ENCODE measurements at regions of chr1 and their contacts with region 1.

Region 1: DNA sequence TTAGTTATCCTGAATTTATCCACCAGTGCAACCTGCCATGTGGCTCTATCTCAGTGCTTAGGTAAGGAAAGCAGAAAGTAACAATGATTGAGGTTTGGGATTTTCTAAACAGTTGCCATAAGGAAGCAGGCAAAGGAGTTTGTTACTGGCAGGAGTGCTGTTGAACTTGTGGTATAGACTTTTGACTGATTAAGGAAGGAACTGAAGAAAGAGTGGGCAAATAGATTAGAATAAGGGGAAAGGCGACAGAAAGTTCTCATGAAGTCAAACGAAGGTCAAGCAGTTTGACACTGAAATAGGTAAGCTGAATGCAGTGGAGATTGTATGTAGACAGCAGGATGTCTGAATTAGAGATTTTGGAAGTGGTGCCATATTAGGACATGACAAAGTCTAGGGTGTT is 24.2 kb upstream of the CR2 start:
- DNase-seq: peak; percentile 41
- ATAC-seq: peak; percentile 2
- H3K4me3 ChIP-seq: peak overlapping the region in 1 of 5 experiments; percentile 54
- H3K4me3 Mint-ChIP-seq: peak overlapping the region; percentile 62
- H3K27ac ChIP-seq: peak overlapping the region; percentile 65 to 83
- H3K27ac Mint-ChIP-seq: peak overlapping the region; percentile 78
- H3K4me1 ChIP-seq: peaks cover 80 to 85% of the 10 kb centered on the region in 2 donors
- H3K4me1 Mint-ChIP-seq: peaks cover 86% of the 10 kb centered on the region
- H3K27me3 ChIP-seq: no peaks in the 10 kb centered on the region
- H3K27me3 Mint-ChIP-seq: no peaks in the 10 kb centered on the region
- CTCF ChIP-seq: no peak

Region 2: DNA sequence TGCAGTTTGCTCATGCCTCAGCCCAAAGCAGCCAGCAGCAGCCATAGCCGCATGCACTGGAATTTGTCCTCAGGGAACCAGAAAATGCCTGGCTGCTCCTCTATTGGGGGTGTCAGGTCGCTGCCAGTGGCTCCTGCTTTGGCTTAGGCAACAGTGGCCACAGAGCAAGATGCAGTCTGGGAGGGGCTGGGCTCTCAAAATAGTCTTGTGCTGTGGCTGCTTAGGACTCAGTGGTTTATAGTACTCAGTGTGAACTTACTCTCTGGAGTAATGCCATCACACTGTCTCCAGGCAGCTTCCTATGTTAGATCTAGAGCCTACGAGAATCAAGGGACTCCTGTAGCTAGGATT is 83.4 kb before region 1 on chr1:
- CTCF ChIA-PET with region 1: no interaction called
- POLR2A ChIA-PET with region 1: no interaction called
- intact Hi-C with region 1: no loop called
- DNase-seq: no peak
- ATAC-seq: no peak
- H3K4me3 ChIP-seq: no peak overlapping the region
- H3K4me3 Mint-ChIP-seq: no peak overlapping the region
- H3K27ac ChIP-seq: peak overlapping the region in 1 of 2 donors; percentile 31
- H3K27ac Mint-ChIP-seq: no peak overlapping the region
- H3K4me1 ChIP-seq: peaks cover 22 to 51% of the 10 kb centered on the region in 2 donors
- H3K4me1 Mint-ChIP-seq: peaks cover 82% of the 10 kb centered on the region
- H3K27me3 ChIP-seq: no peaks in the 10 kb centered on the region
- H3K27me3 Mint-ChIP-seq: no peaks in the 10 kb centered on the region
- CTCF ChIP-seq: no peak

Region 3: GRCh38 chr1:207414606-207415108 is 15.3 kb before region 1 on chr1:
- CTCF ChIA-PET with region 1: interaction called, 8 read pairs
- POLR2A ChIA-PET with region 1: interaction called, 4 read pairs
- intact Hi-C with region 1: loop called (anchors 1 kb)
- DNase-seq: peak; percentile 84
- ATAC-seq: peak; percentile 90
- H3K4me3 ChIP-seq: peak overlapping the region in 4 of 5 experiments; percentile 28 to 39 (median 34)
- H3K4me3 Mint-ChIP-seq: peak overlapping the region; percentile 75
- H3K27ac ChIP-seq: peak overlapping the region; percentile 67 to 93
- H3K27ac Mint-ChIP-seq: peak overlapping the region; percentile 80
- H3K4me1 ChIP-seq: peaks cover 80 to 83% of the 10 kb centered on the region in 2 donors
- H3K4me1 Mint-ChIP-seq: peaks cover 77% of the 10 kb centered on the region
- H3K27me3 ChIP-seq: no peaks in the 10 kb centered on the region
- H3K27me3 Mint-ChIP-seq: no peaks in the 10 kb centered on the region
- CTCF ChIP-seq: no peak

Region 4: DNA sequence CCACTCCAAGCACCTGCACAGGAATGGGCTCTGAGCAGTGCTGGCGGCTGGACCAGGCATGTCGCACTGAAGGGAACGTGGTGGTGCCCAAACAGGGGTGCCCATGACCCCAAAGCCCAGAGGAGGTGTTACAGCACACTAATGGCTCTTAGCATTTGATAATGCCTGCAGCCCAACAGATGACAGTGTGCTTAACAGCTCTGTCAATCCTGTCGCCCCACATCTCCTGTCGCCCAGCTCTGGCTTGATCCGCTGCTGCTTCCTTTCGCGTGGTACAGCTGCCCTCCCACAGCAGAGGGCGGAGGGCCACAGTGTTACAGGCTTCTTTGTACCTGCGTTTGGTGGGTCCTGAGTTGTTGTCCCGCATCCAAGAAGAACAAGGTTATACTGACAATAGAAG is 182.8 kb after region 1 on chr1:
- CTCF ChIA-PET with region 1: no interaction called
- POLR2A ChIA-PET with region 1: no interaction called
- intact Hi-C with region 1: no loop called
- DNase-seq: no peak
- ATAC-seq: no peak
- H3K4me3 ChIP-seq: no peak overlapping the region
- H3K4me3 Mint-ChIP-seq: no peak overlapping the region
- H3K27ac ChIP-seq: no peak overlapping the region
- H3K27ac Mint-ChIP-seq: no peak overlapping the region
- H3K4me1 ChIP-seq: no peaks in the 10 kb centered on the region
- H3K4me1 Mint-ChIP-seq: no peaks in the 10 kb centered on the region
- H3K27me3 ChIP-seq: no peaks in the 10 kb centered on the region
- H3K27me3 Mint-ChIP-seq: no peaks in the 10 kb centered on the region
- CTCF ChIP-seq: no peak

Region 5: DNA sequence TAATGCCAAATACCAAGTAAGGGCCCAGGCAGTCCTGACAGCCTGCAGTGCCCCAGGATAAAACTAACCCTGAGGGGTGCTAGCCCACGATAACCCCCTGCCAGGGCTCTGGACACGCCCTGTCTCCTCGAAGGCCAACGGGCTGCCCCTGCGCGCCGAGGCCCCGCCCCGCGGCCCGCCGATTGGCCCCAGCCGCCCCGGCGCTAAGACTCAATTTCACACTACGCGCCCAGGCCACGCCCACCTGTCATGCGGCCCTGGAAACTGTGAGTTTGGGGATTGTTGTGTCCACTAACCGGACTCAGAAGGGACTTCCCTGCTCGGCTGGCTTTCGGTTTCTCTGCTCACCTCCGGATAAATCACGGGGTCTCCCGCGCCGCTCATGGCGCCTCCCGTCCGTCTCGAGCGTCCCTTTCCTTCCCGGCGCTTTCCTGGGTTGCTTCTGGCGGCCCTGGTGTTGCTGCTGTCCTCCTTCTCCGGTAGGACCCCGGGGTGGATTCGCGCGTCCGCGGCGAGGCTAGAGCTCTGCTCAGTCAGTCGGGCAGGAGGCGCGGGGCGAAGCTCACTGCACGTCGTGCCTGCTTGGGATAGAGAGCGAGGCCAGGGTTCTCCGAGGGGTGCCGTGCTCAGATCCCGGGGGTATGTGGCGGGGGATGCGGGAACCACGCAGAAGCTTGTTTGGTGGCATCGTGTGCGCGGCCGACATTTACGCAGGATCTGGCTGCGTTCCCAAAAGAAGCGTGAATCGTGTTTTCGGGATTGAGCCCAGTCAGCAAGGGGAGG is 215.1 kb after region 1 on chr1 and contains the start of gene CR1L:
- CTCF ChIA-PET with region 1: no interaction called
- POLR2A ChIA-PET with region 1: no interaction called
- intact Hi-C with region 1: no loop called
- DNase-seq: peak; percentile 81
- ATAC-seq: peak; percentile 99
- H3K4me3 ChIP-seq: peak within 1 kb of the TSS; percentile 30 to 73 (median 56)
- H3K4me3 Mint-ChIP-seq: peak within 1 kb of the TSS; percentile 84
- H3K27ac ChIP-seq: no peak within 1 kb of the TSS
- H3K27ac Mint-ChIP-seq: no peak within 1 kb of the TSS
- H3K4me1 ChIP-seq: peaks cover 7 to 12% of the 10 kb centered on the region in 2 donors
- H3K4me1 Mint-ChIP-seq: peaks cover 12% of the 10 kb centered on the region
- H3K27me3 ChIP-seq: no peaks in the 10 kb centered on the region
- H3K27me3 Mint-ChIP-seq: no peaks in the 10 kb centered on the region
- CTCF ChIP-seq: no peak
- total RNA-seq, gene CR1L: 0.59 TPM in 1 of 2 replicates, not detected in the other